ENCODE measurements at regions of chr13 and their contacts with region 1.

Region 1: GRCh38 chr13:113863436-113864272 is at the start of gene GAS6:
- DNase-seq: peak; percentile 78
- total RNA-seq, gene GAS6: 201 TPM

Region 2: GRCh38 chr13:113410472-113411201 is 453.0 kb before region 1 on chr13:
- intact Hi-C with region 1: no loop called
- DNase-seq: peak; percentile 61

Region 3: DNA sequence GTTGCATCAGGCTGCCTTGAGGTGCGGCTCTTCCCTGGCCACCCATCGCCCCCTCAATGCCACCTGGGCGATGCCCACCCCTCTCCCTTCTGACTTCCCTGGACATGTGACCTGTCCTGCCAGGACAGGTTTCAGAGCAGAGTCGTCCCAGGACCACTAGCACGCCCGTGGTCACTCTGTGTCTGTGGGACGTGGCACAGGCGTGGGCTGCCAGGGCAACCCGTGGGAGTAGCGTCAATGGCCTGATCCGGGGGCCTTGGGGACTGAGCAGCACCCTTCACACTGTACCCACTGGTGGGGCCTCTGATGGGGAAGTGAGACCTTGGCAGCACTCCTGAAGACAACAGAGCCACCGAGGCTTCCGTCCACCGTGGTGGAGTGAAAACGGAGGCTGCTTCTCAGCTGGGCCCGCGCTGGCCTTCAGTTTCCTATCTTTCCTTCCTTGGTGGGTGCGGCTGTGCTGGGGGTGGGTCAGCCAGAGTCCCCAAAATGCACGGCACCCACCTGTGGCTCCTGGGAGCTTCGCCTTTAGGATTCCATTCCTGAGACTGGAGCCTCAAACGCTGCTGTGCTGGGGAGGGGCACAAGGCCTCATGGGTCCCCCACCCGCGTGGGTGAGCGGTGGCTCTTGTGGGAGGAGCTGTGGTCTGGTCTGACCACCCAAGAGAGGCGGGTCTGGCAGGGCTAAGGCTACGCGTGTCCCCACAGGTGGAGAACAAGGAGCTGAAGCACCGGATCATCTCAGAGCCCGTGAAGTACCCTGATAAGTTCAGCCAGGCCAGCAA is 131.3 kb before region 1 on chr13:
- intact Hi-C with region 1: no loop called
- DNase-seq: no peak

Region 4: DNA sequence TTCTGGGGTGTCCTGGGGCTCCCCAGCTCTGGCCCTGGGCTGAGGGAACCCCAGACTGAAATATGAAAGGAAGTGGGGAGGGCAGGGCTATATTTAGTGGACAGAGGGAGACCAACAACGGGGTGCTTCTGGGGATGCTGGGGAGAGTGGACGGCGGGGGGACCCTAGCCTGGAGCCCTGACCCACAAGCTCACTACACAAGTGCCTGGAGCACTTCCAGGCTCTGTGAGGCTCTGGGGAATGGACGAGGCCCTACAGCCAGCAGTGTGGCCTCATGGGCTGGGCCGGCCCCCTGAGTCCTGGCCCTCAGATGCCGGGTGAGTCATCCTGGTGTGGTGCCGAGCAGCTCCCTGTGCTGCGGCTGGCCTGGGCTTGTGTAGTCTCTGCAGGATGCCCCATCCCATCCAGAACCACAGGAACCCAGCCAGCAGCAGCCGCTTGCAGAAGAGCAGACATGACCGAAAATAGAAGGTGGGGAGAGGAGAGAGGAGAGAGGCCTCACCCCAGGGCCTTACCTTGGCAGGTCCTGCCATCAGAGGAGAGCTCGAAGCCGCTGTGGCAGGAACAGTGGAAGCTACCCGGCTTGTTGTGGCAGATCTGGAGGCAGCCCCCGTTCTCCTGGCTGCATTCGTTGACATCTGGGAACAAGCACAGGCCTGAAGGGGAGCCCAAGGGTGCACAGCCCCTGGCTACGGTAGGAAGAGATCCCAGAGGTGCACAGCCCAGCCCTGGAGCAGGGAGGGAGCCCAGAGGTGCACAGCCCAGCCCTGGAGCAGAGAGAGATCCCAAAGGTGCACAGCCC is 25.9 kb before region 1 on chr13:
- intact Hi-C with region 1: loop called (anchors 2 kb)
- DNase-seq: peak; percentile 94

Region 5: DNA sequence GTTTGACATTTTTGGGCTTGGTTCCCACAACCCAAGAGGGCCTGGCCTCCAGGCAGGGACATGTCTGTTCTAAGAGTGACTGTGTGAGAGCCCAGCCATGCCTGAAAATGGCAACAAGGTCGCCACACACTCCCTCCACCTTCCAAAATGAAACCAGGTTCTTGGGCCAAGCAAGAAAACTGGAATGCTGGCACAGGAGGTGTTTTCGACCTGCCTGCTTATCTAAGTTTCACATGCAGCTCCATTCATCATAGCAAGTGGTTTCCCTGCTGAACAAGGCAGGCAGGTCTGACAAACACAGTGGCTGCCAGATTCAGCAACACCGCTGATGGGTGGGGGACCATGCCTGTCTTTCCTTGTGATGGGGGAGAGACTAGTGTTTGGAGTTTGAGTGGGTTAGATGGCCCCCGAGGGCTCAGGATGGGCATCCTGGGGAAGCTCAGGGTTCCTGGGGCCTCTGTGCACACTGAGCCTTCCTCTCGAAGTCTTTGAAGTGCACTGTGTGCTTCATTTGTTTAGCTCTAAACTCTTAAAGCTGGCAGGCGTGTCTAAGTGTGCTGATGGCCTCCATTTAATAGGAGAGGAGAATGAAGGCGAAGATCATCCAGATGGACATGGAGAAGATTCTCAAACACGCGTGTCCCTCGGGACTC is 18.1 kb after region 1 on chr13:
- intact Hi-C with region 1: loop called (anchors 2 kb)
- DNase-seq: no peak

Region 6: GRCh38 chr13:113991191-113991669 is 127.6 kb after region 1 on chr13:
- intact Hi-C with region 1: no loop called
- DNase-seq: no peak

Measured in cardiac septum (tissue), 1 donor.